ENCODE measurements at regions of chr6 and their contacts with region 1.

Region 1: GRCh38 chr6:100185615-100186014 is 191.6 kb upstream of the MCHR2 start:
- DNase-seq: no peak
- H3K4me3 ChIP-seq: no peak overlapping the region
- H3K27ac ChIP-seq: no peak overlapping the region
- H3K4me1 ChIP-seq: no peaks in the 10 kb centered on the region
- H3K27me3 ChIP-seq: no peaks in the 10 kb centered on the region
- CTCF ChIP-seq: no peak

Region 2: GRCh38 chr6:100160912-100161311 is 24.7 kb before region 1 on chr6:
- CTCF ChIA-PET with region 1: interaction called, 16 read pairs
- POLR2A ChIA-PET with region 1: no interaction called
- intact Hi-C with region 1: no loop called
- DNase-seq: no peak
- H3K4me3 ChIP-seq: no peak overlapping the region
- H3K27ac ChIP-seq: no peak overlapping the region
- H3K4me1 ChIP-seq: no peaks in the 10 kb centered on the region
- H3K27me3 ChIP-seq: no peaks in the 10 kb centered on the region
- CTCF ChIP-seq: no peak